Endothelial cell of umbilical vein (primary cell): ENCODE measurements at regions of chr4 and their contacts with region 1.

Region 1: GRCh38 chr4:129362674-129363274 is 266.8 kb downstream of the C4orf33 start:
- DNase-seq: peak; percentile 75
- H3K4me3 ChIP-seq: no peak overlapping the region
- H3K27ac ChIP-seq: peak overlapping the region; percentile 5
- H3K4me1 ChIP-seq: peaks cover 22% of the 10 kb centered on the region
- H3K27me3 ChIP-seq: no peaks in the 10 kb centered on the region
- CTCF ChIP-seq: peak; percentile 67 to 68
- POLR2A ChIP-seq: no peak

Region 2: GRCh38 chr4:128913228-128913627 is 449.5 kb before region 1 on chr4:
- CTCF ChIA-PET with region 1: no interaction called
- POLR2A ChIA-PET with region 1: no interaction called
- dilution Hi-C with region 1: no loop called
- intact Hi-C with region 1: no loop called
- DNase-seq: peak; percentile 10
- H3K4me3 ChIP-seq: no peak overlapping the region
- H3K27ac ChIP-seq: no peak overlapping the region
- H3K4me1 ChIP-seq: no peaks in the 10 kb centered on the region
- H3K27me3 ChIP-seq: no peaks in the 10 kb centered on the region
- CTCF ChIP-seq: no peak
- POLR2A ChIP-seq: no peak

Region 3: DNA sequence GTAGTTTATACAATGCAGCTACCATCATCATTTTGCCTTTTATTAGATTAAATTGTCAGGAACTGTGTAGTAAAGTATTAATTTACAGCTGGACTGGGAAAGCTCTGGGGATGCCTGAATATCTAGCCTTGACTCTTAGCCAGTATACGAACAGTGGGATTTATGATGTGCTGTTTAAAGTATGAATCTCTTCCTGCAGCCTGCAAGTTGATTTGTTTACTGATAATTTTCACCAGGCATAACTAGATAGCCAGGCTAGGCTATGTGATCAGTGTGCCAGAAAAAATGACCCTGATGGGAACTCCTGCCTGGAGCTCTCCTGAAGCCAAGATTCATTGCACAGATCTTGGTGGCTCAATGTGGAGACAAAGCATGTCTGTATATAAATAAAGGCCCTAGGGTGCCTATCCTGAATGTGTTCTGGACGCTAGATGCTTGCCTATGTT is 388.6 kb before region 1 on chr4:
- CTCF ChIA-PET with region 1: no interaction called
- POLR2A ChIA-PET with region 1: no interaction called
- dilution Hi-C with region 1: no loop called
- intact Hi-C with region 1: no loop called
- DNase-seq: peak; percentile 9
- H3K4me3 ChIP-seq: no peak overlapping the region
- H3K27ac ChIP-seq: no peak overlapping the region
- H3K4me1 ChIP-seq: no peaks in the 10 kb centered on the region
- H3K27me3 ChIP-seq: no peaks in the 10 kb centered on the region
- CTCF ChIP-seq: no peak
- POLR2A ChIP-seq: no peak

Region 4: DNA sequence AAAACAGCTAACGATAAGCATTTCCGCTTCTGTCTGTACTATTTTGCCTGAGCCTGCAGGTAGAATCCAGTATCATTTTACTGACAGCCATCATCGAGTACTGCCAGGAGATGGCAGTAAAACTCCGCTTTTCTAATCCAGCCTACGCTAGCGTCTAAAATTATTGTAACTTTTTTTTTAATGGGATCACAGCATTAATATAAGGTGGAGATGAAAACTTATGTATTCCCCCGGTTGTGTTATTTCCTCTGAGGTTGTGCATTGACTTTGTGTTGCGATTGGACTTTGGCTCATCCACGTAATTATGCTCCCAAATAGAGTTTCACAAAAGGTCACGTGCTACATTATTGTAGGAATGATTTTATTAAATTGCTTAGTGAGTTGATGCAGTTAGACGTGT is 18.7 kb before region 1 on chr4:
- CTCF ChIA-PET with region 1: interaction called, 10 read pairs
- POLR2A ChIA-PET with region 1: no interaction called
- dilution Hi-C with region 1: no loop called
- intact Hi-C with region 1: no loop called
- DNase-seq: peak; percentile 50
- H3K4me3 ChIP-seq: no peak overlapping the region
- H3K27ac ChIP-seq: no peak overlapping the region
- H3K4me1 ChIP-seq: no peaks in the 10 kb centered on the region
- H3K27me3 ChIP-seq: no peaks in the 10 kb centered on the region
- CTCF ChIP-seq: peak; percentile 56 to 60
- POLR2A ChIP-seq: no peak

Region 5: DNA sequence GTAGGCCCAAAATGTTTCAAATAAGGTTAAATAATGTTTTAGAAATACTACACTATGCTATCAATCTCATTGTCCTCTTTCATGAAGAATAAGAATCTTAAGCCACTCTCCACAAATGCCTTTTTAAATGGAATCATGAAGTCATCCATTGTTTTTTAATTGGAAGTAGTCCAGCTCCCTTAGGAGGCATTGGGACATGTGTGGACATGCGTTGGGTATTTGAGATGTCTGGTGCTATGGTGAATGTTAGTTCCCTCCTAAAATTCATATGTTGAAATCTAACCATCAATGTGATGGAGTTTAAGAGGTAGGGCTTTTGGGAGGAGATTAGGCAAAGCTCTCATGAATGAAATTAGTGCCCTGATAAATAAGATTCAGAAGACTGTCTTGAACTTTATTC is 22.2 kb after region 1 on chr4:
- CTCF ChIA-PET with region 1: no interaction called
- POLR2A ChIA-PET with region 1: no interaction called
- dilution Hi-C with region 1: no loop called
- intact Hi-C with region 1: no loop called
- DNase-seq: peak; percentile 49
- H3K4me3 ChIP-seq: no peak overlapping the region
- H3K27ac ChIP-seq: no peak overlapping the region
- H3K4me1 ChIP-seq: no peaks in the 10 kb centered on the region
- H3K27me3 ChIP-seq: no peaks in the 10 kb centered on the region
- CTCF ChIP-seq: no peak
- POLR2A ChIP-seq: no peak

Region 6: GRCh38 chr4:129515356-129515755 is 152.6 kb after region 1 on chr4:
- CTCF ChIA-PET with region 1: interaction called, 6 read pairs
- POLR2A ChIA-PET with region 1: no interaction called
- dilution Hi-C with region 1: no loop called
- intact Hi-C with region 1: loop called (anchors 1 kb)
- DNase-seq: peak; percentile 90
- H3K4me3 ChIP-seq: no peak overlapping the region
- H3K27ac ChIP-seq: peak overlapping the region; percentile 66
- H3K4me1 ChIP-seq: peaks cover 22% of the 10 kb centered on the region
- H3K27me3 ChIP-seq: no peaks in the 10 kb centered on the region
- CTCF ChIP-seq: no peak
- POLR2A ChIP-seq: peak; percentile 15

Region 7: GRCh38 chr4:129604632-129605255 is 242.0 kb after region 1 on chr4:
- CTCF ChIA-PET with region 1: no interaction called
- POLR2A ChIA-PET with region 1: no interaction called
- dilution Hi-C with region 1: no loop called
- intact Hi-C with region 1: no loop called
- DNase-seq: no peak
- H3K4me3 ChIP-seq: no peak overlapping the region
- H3K27ac ChIP-seq: no peak overlapping the region
- H3K4me1 ChIP-seq: no peaks in the 10 kb centered on the region
- H3K27me3 ChIP-seq: no peaks in the 10 kb centered on the region
- CTCF ChIP-seq: no peak
- POLR2A ChIP-seq: no peak

Region 8: GRCh38 chr4:129641179-129641578 is 278.4 kb after region 1 on chr4:
- CTCF ChIA-PET with region 1: interaction called, 230 read pairs
- POLR2A ChIA-PET with region 1: no interaction called
- dilution Hi-C with region 1: no loop called
- intact Hi-C with region 1: loop called (anchors 1 kb)
- DNase-seq: peak; percentile 80
- H3K4me3 ChIP-seq: no peak overlapping the region
- H3K27ac ChIP-seq: no peak overlapping the region
- H3K4me1 ChIP-seq: no peaks in the 10 kb centered on the region
- H3K27me3 ChIP-seq: no peaks in the 10 kb centered on the region
- CTCF ChIP-seq: peak; percentile 67 to 71
- POLR2A ChIP-seq: no peak

Region 9: GRCh38 chr4:129929052-129929451 is 566.3 kb after region 1 on chr4:
- CTCF ChIA-PET with region 1: interaction called, 3 read pairs
- POLR2A ChIA-PET with region 1: no interaction called
- dilution Hi-C with region 1: no loop called
- intact Hi-C with region 1: loop called (anchors 5 kb)
- DNase-seq: peak; percentile 5
- H3K4me3 ChIP-seq: no peak overlapping the region
- H3K27ac ChIP-seq: no peak overlapping the region
- H3K4me1 ChIP-seq: no peaks in the 10 kb centered on the region
- H3K27me3 ChIP-seq: no peaks in the 10 kb centered on the region
- CTCF ChIP-seq: peak in 1 of 2 donors; percentile 20
- POLR2A ChIP-seq: no peak

Region 10: GRCh38 chr4:130808492-130808891 is 1445.7 kb after region 1 on chr4:
- CTCF ChIA-PET with region 1: interaction called, 44 read pairs
- POLR2A ChIA-PET with region 1: no interaction called
- dilution Hi-C with region 1: no loop called
- intact Hi-C with region 1: loop called (anchors 1 kb)
- DNase-seq: peak; percentile 41
- H3K4me3 ChIP-seq: no peak overlapping the region
- H3K27ac ChIP-seq: no peak overlapping the region
- H3K4me1 ChIP-seq: no peaks in the 10 kb centered on the region
- H3K27me3 ChIP-seq: no peaks in the 10 kb centered on the region
- CTCF ChIP-seq: peak; percentile 39 to 40
- POLR2A ChIP-seq: no peak